Activated naive CD4-positive, alpha-beta T cell treated with anti-CD3 and anti-CD28 coated beads for 36 hours (primary cell): ENCODE measurements at regions of chr14 and their contacts with region 1.

Region 1: DNA sequence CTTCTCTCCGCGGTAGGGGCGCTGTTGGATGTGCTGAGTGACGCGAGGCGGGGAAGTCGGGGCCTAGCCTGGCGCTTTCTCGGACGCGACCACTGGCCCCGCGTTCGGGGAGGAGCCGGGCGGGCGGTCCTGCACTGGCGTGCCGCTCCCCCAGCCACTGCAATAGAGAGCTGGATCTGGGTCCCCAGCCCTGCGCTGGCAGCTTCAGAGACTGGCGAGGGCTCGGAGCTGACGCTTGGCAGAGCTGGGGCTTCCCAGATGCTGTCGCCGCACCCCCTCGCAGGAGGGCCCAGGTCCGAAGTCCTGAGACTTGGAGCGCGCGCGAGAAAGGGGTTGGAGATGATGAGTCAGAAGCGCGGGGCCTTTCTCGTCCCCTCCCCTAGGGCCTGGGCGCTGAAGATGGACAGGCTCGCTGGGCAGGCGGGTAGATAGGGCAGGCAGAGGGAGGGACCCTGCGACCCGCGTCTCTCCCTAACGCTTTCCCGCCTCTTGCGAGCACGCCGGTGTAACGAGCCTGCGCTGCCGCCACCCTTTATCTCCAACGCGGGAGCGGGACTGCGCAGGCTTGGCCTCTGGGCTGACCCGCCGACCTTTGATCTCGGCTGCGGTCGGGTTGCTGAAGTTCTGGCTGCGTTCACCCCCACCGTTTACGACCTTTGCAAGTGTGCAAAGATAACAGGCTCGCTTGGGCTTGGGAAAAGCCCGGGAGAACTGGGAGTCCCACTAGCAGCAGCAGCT is 3.0 kb downstream of the TMEM253 start:
- DNase-seq: peak; percentile 98
- H3K4me3 Mint-ChIP-seq: peak overlapping the region; percentile 87
- H3K27ac Mint-ChIP-seq: peak overlapping the region; percentile 84
- H3K4me1 Mint-ChIP-seq: peaks cover 29% of the 10 kb centered on the region
- H3K27me3 Mint-ChIP-seq: no peaks in the 10 kb centered on the region

Region 2: DNA sequence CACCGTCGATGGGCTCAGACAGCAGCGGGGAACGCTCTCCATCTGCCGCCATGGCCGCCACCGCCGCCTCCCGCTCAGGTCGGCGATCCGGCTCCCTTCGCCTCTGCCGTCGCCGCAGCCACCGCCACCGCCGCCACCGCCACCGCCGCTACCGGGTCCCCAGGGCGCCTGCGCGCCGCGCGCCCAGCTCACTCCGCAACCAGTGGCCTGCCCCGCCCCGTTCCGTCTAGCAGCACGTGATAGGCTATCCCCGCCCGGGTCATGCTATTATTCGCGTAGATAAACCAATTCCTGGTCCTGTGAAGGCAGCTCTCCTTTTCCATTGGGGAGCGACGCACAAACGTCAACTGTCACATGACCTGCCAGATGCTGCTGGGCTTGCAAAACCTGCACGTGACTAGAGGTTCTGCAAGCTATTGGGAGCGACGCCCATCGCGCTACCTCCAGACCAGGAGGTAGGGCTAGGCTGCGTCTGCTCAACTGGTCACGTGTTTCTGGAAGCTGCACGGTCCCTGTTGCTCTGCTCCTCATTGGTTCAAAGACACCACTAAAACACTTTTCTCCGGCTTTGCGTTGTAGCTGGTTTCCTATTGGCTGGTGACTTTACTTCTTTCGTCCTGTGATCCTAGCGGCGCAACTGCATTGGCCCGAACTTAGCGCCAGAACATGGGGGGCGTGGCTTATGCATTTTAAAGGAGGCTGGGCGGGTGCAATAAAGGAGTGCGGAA is 642.4 kb before region 1 on chr14 and contains the start of gene PIP4P1:
- CTCF ChIA-PET with region 1: no interaction called
- intact Hi-C with region 1: loop called (anchors 5 kb)
- DNase-seq: peak; percentile 99
- H3K4me3 Mint-ChIP-seq: peak within 1 kb of the TSS; percentile 92
- H3K27ac Mint-ChIP-seq: peak within 1 kb of the TSS; percentile 96
- H3K4me1 Mint-ChIP-seq: peaks cover 29% of the 10 kb centered on the region
- H3K27me3 Mint-ChIP-seq: no peaks in the 10 kb centered on the region
- total RNA-seq, gene PIP4P1: 31.6 to 32.3 TPM

Region 3: GRCh38 chr14:20989572-20990551 is 114.0 kb before region 1 on chr14 and contains the start of gene METTL17:
- CTCF ChIA-PET with region 1: interaction called, 5 read pairs
- intact Hi-C with region 1: loop called (anchors 1 kb)
- DNase-seq: peak; percentile 94
- H3K4me3 Mint-ChIP-seq: peak within 1 kb of the TSS; percentile 86
- H3K27ac Mint-ChIP-seq: peak within 1 kb of the TSS; percentile 86
- H3K4me1 Mint-ChIP-seq: peaks cover 19% of the 10 kb centered on the region
- H3K27me3 Mint-ChIP-seq: no peaks in the 10 kb centered on the region
- total RNA-seq, gene METTL17: 90.9 to 97.5 TPM

Region 4: GRCh38 chr14:21071225-21072030 is 32.5 kb before region 1 on chr14:
- CTCF ChIA-PET with region 1: interaction called, 76 read pairs
- intact Hi-C with region 1: loop called (anchors 1 kb)
- DNase-seq: peak; percentile 84
- H3K4me3 Mint-ChIP-seq: peak overlapping the region; percentile 65
- H3K27ac Mint-ChIP-seq: no peak overlapping the region
- H3K4me1 Mint-ChIP-seq: peaks cover 29% of the 10 kb centered on the region
- H3K27me3 Mint-ChIP-seq: peaks cover 55% of the 10 kb centered on the region

Region 5: DNA sequence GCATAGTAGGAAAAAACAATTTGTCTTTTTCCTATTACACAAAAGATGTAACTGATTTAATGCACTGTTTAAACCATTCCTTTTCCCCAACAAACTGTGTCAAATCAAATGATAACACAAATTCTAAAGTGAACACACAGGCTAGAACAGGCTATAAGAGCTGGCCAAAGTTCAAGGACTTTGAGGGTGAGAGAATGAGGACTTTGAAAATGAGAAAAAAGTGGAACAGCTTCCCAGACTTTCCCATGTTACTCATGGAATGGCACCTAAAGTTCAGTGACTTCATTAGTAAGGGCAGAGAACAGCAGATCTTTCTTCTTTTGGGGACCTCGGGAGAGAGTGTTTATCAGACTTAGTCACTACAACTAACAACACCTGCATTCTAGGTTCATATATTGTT is 19.6 kb after region 1 on chr14:
- CTCF ChIA-PET with region 1: interaction called, 18 read pairs
- intact Hi-C with region 1: no loop called
- DNase-seq: no peak
- H3K4me3 Mint-ChIP-seq: no peak overlapping the region
- H3K27ac Mint-ChIP-seq: no peak overlapping the region
- H3K4me1 Mint-ChIP-seq: no peaks in the 10 kb centered on the region
- H3K27me3 Mint-ChIP-seq: peaks cover 2% of the 10 kb centered on the region

Region 6: GRCh38 chr14:21455911-21456667 is 352.2 kb after region 1 on chr14 and contains the start of gene CHD8:
- CTCF ChIA-PET with region 1: no interaction called
- intact Hi-C with region 1: loop called (anchors 1 kb)
- DNase-seq: peak; percentile 100
- H3K4me3 Mint-ChIP-seq: peak within 1 kb of the TSS; percentile 91
- H3K27ac Mint-ChIP-seq: peak within 1 kb of the TSS; percentile 98
- H3K4me1 Mint-ChIP-seq: peaks cover 37% of the 10 kb centered on the region
- H3K27me3 Mint-ChIP-seq: no peaks in the 10 kb centered on the region
- total RNA-seq, gene CHD8: 73.9 to 75.5 TPM